BJ (cell line): ENCODE measurements at regions of chr1 and their contacts with region 1.

Region 1: DNA sequence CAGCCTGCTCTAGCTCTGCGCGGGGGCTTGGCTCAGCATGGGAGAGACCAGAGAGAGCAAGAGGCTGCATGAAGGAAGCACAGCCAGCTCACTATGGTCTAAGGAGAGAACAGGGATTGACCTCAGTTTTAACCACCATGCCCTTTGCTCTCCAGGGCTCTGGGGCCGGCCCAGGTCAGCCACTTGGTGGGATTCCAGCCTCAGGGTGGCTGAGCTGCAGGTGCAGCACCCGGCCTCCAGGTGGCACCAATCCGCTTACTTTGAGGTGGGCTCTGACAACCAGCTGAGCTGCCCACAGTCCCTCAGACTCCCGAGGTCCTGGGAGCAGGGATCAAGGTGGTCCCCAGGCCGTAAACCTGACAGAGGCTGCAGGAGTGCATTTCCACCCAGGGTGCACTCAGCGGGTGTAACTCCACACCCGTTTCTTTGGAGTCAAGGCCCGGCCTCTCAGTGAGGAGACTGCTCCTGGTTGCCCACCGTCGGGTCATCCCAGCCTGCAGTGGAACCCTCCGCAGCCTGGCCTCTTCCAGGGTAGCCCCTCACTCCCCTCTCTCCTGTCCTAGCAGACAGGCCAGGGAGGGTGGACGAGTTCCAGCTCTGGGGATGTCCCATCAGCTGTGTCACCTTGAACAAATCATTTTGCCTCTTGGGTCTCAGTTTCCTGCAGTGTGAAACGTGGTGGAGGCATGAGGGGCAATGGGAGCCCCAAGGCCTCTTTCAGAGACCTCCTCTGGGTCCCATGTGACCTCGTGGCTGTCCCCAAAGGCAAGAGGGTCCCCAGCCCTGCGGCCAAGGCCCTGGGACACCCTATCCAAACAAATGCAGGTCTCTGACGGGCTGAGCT is 607 bp upstream of the LGR6 start:
- DNase-seq: no peak
- H3K4me3 ChIP-seq: no peak overlapping the region
- H3K27me3 ChIP-seq: peaks cover 36% of the 10 kb centered on the region
- CTCF ChIP-seq: peak; percentile 91

Region 2: GRCh38 chr1:202009326-202010179 is 183.4 kb before region 1 on chr1:
- CTCF ChIA-PET with region 1: no interaction called
- POLR2A ChIA-PET with region 1: no interaction called
- DNase-seq: no peak
- H3K4me3 ChIP-seq: no peak overlapping the region
- H3K27me3 ChIP-seq: peaks cover 2% of the 10 kb centered on the region; the same call in 1 of the 2 replicates
- CTCF ChIP-seq: peak; percentile 89

Region 3: GRCh38 chr1:202085682-202086404 is 107.1 kb before region 1 on chr1:
- CTCF ChIA-PET with region 1: no interaction called
- POLR2A ChIA-PET with region 1: no interaction called
- DNase-seq: no peak
- H3K4me3 ChIP-seq: no peak overlapping the region
- H3K27me3 ChIP-seq: peaks cover under 1% of the 10 kb centered on the region
- CTCF ChIP-seq: no peak

Region 4: GRCh38 chr1:202213361-202214088 is 20.5 kb after region 1 on chr1:
- CTCF ChIA-PET with region 1: interaction called, 20 read pairs
- POLR2A ChIA-PET with region 1: no interaction called
- DNase-seq: no peak
- H3K4me3 ChIP-seq: no peak overlapping the region
- H3K27me3 ChIP-seq: peaks cover 67% of the 10 kb centered on the region
- CTCF ChIP-seq: no peak

Region 5: DNA sequence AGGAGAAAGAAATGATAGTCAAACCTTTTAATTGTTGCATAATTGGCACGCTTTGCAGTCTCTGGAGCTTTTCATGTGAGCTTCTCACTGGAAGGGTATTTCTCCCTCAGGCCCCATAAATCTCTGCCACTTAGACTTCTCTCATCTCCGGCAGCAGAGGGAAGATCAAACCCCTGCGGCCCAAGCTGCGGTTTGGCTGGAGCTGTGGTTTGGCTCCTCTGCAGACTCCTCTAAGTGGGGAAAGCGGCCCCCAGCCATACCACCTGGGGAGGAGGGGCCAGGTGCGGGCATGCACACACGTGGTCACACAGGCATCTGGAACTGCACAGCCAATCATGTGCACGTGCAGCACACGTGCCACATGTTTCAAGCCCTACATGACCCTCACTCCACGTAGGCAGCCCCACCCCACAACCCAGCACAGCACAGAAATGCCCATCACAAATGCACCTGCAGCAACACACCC is 90.4 kb after region 1 on chr1:
- CTCF ChIA-PET with region 1: interaction called, 12 read pairs
- POLR2A ChIA-PET with region 1: no interaction called
- DNase-seq: peak; percentile 38
- H3K4me3 ChIP-seq: no peak overlapping the region
- H3K27me3 ChIP-seq: peaks cover under 1% of the 10 kb centered on the region
- CTCF ChIP-seq: no peak

Region 6: DNA sequence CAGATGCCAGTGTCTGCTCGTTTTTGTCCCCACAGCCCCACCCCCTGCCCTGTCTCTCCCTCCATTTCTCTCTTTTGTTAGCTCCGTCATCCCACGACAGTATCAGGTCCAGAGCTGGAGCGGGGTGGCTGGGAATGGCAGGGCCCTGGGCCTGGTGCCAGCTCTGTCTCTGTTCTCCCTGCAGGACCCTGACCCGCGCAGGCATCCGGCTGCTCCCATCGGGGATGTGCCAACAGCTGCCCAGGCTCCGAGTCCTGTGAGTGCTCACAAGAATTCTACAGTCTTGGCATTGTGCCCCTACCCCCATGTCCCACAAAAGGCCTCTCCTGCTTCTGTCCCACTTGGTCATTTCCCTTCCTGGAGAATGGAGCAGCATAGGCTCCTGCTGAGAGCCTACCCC is 111.4 kb after region 1 on chr1:
- CTCF ChIA-PET with region 1: interaction called, 80 read pairs
- POLR2A ChIA-PET with region 1: no interaction called
- DNase-seq: no peak
- H3K4me3 ChIP-seq: no peak overlapping the region
- H3K27me3 ChIP-seq: peaks cover 59% of the 10 kb centered on the region
- CTCF ChIP-seq: no peak

Region 7: DNA sequence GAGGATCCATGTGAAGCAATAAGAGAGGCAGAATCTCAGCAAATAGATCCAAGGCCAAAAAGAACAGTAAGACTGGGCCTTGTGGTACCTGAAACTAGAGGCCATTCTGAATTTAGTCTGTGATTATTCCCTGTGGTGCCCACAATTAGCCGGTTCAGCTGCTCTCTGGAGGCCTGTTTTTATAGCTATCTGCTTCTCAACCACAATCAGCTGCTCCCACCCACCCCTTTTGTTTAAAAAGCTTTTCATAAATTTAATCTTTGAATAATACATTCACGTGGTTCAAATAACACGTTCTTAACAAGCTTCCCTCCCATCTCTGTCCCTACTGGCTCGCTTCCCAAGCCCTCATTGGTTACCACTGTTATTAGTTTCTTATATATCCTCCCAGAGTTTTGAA is 130.7 kb after region 1 on chr1:
- CTCF ChIA-PET with region 1: interaction called, 206 read pairs
- POLR2A ChIA-PET with region 1: no interaction called
- DNase-seq: no peak
- H3K4me3 ChIP-seq: no peak overlapping the region
- H3K27me3 ChIP-seq: peaks cover 8% of the 10 kb centered on the region
- CTCF ChIP-seq: no peak